Activated CD4-positive, alpha-beta T cell treated with anti-CD3 and anti-CD28 coated beads for 36 hours (primary cell): ENCODE measurements at regions of chr11 and their contacts with region 1.

Region 1: DNA sequence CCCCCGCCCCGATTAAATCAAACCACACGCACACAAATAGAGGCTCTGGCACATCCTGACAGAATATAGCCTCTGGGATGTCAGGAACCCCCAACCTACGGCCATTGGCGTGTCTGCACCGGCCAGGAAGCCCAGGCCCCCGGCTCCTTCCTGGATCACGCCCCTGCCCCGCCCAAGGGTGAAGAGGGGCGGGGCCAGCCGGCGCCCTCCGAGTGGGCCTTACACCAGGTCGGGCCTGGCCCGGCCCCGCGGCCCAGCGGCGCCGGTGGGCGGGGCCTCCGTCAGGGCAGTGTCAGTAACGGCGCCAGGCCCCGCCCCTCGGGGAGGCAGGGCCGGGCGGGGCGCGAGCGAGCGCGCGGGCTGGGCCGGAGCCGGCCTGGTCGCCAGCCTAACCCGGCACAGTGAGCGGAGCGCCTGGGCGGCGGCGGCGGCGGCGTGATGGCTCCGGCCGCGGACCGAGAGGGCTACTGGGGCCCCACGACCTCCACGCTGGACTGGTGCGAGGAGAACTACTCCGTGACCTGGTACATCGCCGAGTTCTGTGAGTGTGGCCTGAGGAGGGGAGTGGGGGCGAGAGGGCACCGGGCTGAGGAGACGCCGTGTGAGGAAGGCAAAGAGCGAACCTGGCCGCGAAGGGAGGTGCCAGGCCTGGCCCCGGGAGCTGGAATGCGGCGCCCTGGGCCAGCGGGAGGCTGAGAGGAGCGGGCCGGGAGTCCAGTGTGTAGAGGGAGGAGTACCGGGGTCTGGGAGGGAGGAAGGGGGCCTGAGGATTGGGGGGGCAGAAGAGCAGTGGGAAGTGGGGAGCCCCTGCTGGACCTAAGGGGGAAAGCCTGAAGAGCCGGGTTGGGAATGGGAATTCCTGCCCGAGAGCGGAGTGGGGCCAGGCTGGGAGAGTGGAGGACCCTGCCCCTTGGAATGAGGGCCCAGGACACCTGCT is at the start of gene ACER3:
- DNase-seq: peak; percentile 94
- ATAC-seq: peak; percentile 99
- H3K4me3 Mint-ChIP-seq: peak within 1 kb of the TSS; percentile 72
- H3K27ac Mint-ChIP-seq: peak within 1 kb of the TSS; percentile 70
- H3K4me1 Mint-ChIP-seq: peaks cover 20% of the 10 kb centered on the region
- H3K27me3 Mint-ChIP-seq: no peaks in the 10 kb centered on the region
- total RNA-seq, gene ACER3: 8.9 to 10.3 TPM

Region 2: GRCh38 chr11:76782526-76783293 is 78.1 kb before region 1 on chr11:
- CTCF ChIA-PET with region 1: no interaction called
- POLR2A ChIA-PET with region 1: no interaction called
- intact Hi-C with region 1: loop called in 1 of 2 experiments (anchors 1 kb)
- DNase-seq: peak; percentile 91
- ATAC-seq: peak; percentile 89
- H3K4me3 Mint-ChIP-seq: peak overlapping the region; percentile 69
- H3K27ac Mint-ChIP-seq: peak overlapping the region; percentile 96
- H3K4me1 Mint-ChIP-seq: peaks cover 15% of the 10 kb centered on the region
- H3K27me3 Mint-ChIP-seq: peaks cover 41% of the 10 kb centered on the region

Region 3: GRCh38 chr11:76807206-76807875 is 53.5 kb before region 1 on chr11:
- CTCF ChIA-PET with region 1: interaction called, 5 read pairs
- POLR2A ChIA-PET with region 1: no interaction called
- intact Hi-C with region 1: loop called (anchors 1 to 2 kb)
- DNase-seq: peak; percentile 91
- ATAC-seq: peak; percentile 21
- H3K4me3 Mint-ChIP-seq: no peak overlapping the region
- H3K27ac Mint-ChIP-seq: no peak overlapping the region
- H3K4me1 Mint-ChIP-seq: peaks cover 31% of the 10 kb centered on the region
- H3K27me3 Mint-ChIP-seq: peaks cover 12% of the 10 kb centered on the region

Region 4: GRCh38 chr11:77066229-77067042 is 205.6 kb after region 1 on chr11 and contains the start of gene CAPN5:
- CTCF ChIA-PET with region 1: no interaction called
- POLR2A ChIA-PET with region 1: no interaction called
- intact Hi-C with region 1: loop called in 1 of 2 experiments (anchors 1 kb)
- DNase-seq: peak; percentile 91
- ATAC-seq: peak; percentile 97
- H3K4me3 Mint-ChIP-seq: peak within 1 kb of the TSS; percentile 75
- H3K27ac Mint-ChIP-seq: peak within 1 kb of the TSS; percentile 78
- H3K4me1 Mint-ChIP-seq: peaks cover 4% of the 10 kb centered on the region
- H3K27me3 Mint-ChIP-seq: no peaks in the 10 kb centered on the region
- total RNA-seq, gene CAPN5: 0.62 to 0.76 TPM

Region 5: DNA sequence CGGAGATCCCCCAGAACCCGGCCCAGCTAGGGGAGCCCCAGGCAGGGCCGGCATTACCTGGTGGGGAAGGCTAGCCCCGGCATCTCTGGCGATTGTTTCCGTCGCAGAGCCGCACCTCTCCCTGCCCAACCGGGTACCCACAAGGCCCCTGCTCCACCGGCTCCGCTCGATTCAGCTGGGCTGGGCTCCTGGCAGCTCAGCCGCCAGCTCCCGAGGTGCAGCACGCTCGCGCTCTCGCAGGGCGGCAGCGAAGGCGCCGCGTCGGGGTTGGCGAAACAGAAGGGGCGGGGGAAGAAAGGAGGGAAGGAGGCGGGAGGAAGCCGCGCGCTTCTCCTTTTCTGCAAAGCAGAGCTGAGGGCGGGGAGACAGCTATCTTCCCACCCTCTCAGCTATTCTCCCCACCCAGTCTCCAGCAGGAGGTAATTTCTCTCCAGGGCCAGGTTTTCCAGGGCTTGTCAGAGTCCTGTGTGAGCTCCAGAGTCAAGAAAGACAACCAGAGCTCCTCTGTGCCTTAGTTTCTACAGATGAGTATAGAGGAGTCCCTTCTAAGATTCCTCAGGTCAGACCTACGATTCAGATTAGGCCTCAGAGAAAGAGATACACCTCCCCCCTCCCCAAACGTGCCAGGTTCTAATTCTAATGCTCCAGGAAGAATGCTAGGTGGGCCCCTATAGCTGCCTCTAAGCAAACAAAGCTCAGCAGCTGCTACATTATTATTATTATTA is 551.1 kb after region 1 on chr11:
- CTCF ChIA-PET with region 1: no interaction called
- POLR2A ChIA-PET with region 1: no interaction called
- intact Hi-C with region 1: loop called in 1 of 2 experiments (anchors 2 kb)
- DNase-seq: peak; percentile 91
- ATAC-seq: peak; percentile 98
- H3K4me3 Mint-ChIP-seq: peak overlapping the region; percentile 76
- H3K27ac Mint-ChIP-seq: peak overlapping the region; percentile 79
- H3K4me1 Mint-ChIP-seq: peaks cover 30% of the 10 kb centered on the region
- H3K27me3 Mint-ChIP-seq: no peaks in the 10 kb centered on the region

Region 6: GRCh38 chr11:77884186-77884828 is 1023.5 kb after region 1 on chr11:
- CTCF ChIA-PET with region 1: no interaction called
- POLR2A ChIA-PET with region 1: no interaction called
- intact Hi-C with region 1: no loop called
- DNase-seq: no peak
- ATAC-seq: no peak
- H3K4me3 Mint-ChIP-seq: no peak overlapping the region
- H3K27ac Mint-ChIP-seq: no peak overlapping the region
- H3K4me1 Mint-ChIP-seq: no peaks in the 10 kb centered on the region
- H3K27me3 Mint-ChIP-seq: no peaks in the 10 kb centered on the region